ENCODE measurements at regions of chr12 and their contacts with region 1.

Region 1: DNA sequence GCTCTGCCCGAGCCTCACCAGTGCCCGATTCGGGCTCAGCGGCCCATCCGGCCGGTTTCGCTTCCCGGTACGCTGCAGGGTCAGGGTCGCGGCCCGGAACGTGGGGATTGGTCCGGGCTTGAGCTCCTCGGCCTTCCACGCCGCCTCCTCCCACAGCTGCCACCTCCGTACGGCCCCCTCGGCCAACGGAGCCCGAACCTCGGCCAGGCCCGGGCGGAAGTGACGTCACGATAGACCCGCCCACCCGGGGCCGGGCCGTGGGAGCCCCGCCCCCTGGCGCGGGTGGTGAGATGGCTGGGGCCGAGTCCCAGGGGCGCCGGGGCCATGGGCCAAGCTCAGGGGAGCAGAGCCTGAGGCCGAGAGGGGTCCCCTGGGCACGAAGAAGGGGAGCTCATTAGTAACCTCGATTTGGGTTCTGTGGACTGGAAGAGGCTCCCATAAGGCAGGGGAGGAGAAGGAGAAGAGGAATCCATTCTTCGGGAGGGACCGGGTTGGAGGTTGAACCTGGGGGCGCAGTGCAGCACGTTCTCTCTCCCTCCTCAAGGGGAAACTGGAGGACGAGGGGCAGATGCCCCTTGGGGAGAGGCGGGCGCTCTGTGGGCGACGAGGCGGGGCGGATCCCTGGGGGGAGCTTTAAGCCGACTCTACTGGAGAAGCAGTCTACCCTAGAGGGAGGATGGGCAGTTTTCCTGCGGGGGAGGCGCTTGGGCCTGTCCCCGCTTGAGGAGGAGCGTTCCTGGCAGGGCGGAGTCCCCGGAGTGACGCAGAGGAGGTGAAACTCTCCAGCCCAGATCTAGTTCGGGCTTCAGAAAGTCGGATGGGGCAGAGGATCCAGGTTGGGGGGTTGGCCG is at the start of gene MLF2:
- DNase-seq: peak; percentile 100
- H3K4me3 Mint-ChIP-seq: peak within 1 kb of the TSS; percentile 96
- H3K27ac Mint-ChIP-seq: peak within 1 kb of the TSS; percentile 98
- H3K4me1 Mint-ChIP-seq: peaks cover 26% of the 10 kb centered on the region
- H3K27me3 Mint-ChIP-seq: peaks cover 1% of the 10 kb centered on the region
- total RNA-seq, gene MLF2: 163 and 180 TPM in 2 replicates

Region 2: GRCh38 chr12:6632026-6632983 is 120.8 kb before region 1 on chr12:
- intact Hi-C with region 1: no loop called
- DNase-seq: peak; percentile 88
- H3K4me3 Mint-ChIP-seq: peak overlapping the region; percentile 84
- H3K27ac Mint-ChIP-seq: peak overlapping the region; percentile 94
- H3K4me1 Mint-ChIP-seq: peaks cover 51% of the 10 kb centered on the region
- H3K27me3 Mint-ChIP-seq: no peaks in the 10 kb centered on the region

Region 3: DNA sequence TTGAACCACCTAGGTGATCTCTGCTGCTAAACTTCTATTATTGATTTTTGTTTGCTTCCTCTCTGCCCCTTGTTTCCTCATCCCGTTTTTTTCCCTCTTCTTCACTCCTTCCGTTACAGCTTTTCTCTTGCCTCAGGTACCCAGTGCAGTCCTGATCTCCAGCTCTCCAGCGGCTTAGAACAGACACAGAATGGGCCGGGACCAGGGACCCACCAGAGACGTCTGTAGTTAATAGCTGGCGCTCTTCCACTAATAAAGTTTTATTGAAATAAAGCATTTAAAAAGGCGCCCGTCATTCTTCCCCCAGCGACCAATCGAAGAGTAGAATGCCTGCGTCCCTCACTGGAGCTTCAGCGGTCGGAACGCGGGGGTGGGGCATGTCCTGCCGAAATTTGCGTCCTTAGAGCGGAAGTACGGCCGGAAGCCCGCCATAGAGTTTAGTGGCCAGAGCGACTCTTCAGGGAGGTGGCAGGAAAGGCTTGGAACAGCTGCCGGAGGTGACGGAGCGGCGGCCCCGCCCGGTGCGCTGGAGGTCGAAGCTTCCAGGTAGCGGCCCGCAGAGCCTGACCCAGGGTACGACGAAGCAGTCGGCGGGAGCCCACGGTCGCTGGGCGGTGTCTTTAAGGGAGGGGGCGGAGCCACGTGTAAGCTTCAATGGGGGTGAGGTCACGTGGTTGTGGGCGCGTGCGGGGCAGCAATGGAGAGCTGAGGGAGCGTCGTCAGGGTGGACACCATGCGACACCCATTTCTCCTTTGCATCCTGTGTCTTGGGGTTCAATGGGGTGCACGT is 29.3 kb before region 1 on chr12 and contains the start of gene COPS7A:
- intact Hi-C with region 1: loop called (anchors 1 kb)
- DNase-seq: peak; percentile 99
- H3K4me3 Mint-ChIP-seq: peak within 1 kb of the TSS; percentile 89
- H3K27ac Mint-ChIP-seq: peak within 1 kb of the TSS; percentile 98
- H3K4me1 Mint-ChIP-seq: peaks cover 27% of the 10 kb centered on the region
- H3K27me3 Mint-ChIP-seq: peaks cover 3% of the 10 kb centered on the region
- total RNA-seq, gene COPS7A: 39.5 and 44.8 TPM in 2 replicates

Region 4: GRCh38 chr12:6742834-6743233 is 10.3 kb before region 1 on chr12:
- intact Hi-C with region 1: no loop called
- DNase-seq: no peak
- H3K4me3 Mint-ChIP-seq: no peak overlapping the region
- H3K27ac Mint-ChIP-seq: peak overlapping the region; percentile 52
- H3K4me1 Mint-ChIP-seq: peaks cover 28% of the 10 kb centered on the region
- H3K27me3 Mint-ChIP-seq: no peaks in the 10 kb centered on the region

Region 5: GRCh38 chr12:6778574-6779550 is 25.7 kb after region 1 on chr12:
- intact Hi-C with region 1: loop called (anchors 1 kb)
- DNase-seq: peak; percentile 97
- H3K4me3 Mint-ChIP-seq: peak overlapping the region; percentile 84
- H3K27ac Mint-ChIP-seq: peak overlapping the region; percentile 88
- H3K4me1 Mint-ChIP-seq: peaks cover 76% of the 10 kb centered on the region
- H3K27me3 Mint-ChIP-seq: no peaks in the 10 kb centered on the region

Region 6: GRCh38 chr12:6825398-6826124 is 72.4 kb after region 1 on chr12:
- intact Hi-C with region 1: loop called (anchors 1 kb)
- DNase-seq: peak; percentile 95
- H3K4me3 Mint-ChIP-seq: peak overlapping the region; percentile 20
- H3K27ac Mint-ChIP-seq: no peak overlapping the region
- H3K4me1 Mint-ChIP-seq: peaks cover 38% of the 10 kb centered on the region
- H3K27me3 Mint-ChIP-seq: peaks cover 50% of the 10 kb centered on the region

Measured in activated CD4-positive, alpha-beta T cell treated with anti-CD3 and anti-CD28 coated beads, Interleukin-2, amount 10 ng/mL, durations not matched to agents 24 days and 14 days (primary cell).